ENCODE measurements at regions of chr16 and their contacts with region 1.

Region 1: DNA sequence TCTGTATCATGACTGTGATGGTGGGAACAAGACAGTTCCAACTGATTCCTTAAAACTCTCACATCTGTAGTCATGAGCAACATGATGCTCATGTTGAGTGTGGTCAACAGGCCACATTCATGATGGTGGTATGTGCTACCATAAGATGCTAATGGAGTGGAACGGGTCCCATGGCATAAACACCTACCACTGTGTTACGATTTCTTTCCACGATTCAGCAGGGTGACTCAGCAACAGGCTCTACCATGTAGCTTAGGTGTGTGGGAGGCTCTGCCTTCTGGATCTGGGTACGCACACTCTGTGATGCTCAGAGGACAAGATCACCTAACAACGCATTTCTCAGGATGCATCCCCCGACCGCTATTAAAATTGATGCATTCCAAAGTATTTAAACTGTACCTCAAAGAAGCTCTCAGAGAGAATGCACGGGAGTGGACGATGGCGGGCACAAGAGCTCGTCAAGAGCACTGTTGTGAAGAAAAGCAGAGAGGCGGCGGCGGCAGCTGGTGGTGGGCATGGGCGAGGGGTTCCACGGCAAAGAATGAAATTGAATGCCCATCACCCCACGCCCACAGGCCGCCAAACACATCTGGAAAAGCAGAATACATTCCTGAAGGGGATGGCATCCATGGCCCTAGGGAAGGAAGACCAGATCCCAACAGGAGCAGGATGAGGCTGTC is 133.3 kb downstream of the ZNF778 start:
- DNase-seq: peak; percentile 73
- H3K4me3 Mint-ChIP-seq: peak overlapping the region; percentile 2
- H3K27ac Mint-ChIP-seq: peak overlapping the region; percentile 79
- H3K4me1 Mint-ChIP-seq: peaks cover 87% of the 10 kb centered on the region
- H3K27me3 Mint-ChIP-seq: no peaks in the 10 kb centered on the region

Region 2: GRCh38 chr16:89319883-89320781 is 30.7 kb before region 1 on chr16:
- CTCF ChIA-PET with region 1: no interaction called
- POLR2A ChIA-PET with region 1: interaction called, 13 read pairs
- intact Hi-C with region 1: loop called (anchors 1 kb)
- DNase-seq: peak; percentile 74
- H3K4me3 Mint-ChIP-seq: peak overlapping the region; percentile 21
- H3K27ac Mint-ChIP-seq: peak overlapping the region; percentile 76
- H3K4me1 Mint-ChIP-seq: peaks cover 96% of the 10 kb centered on the region
- H3K27me3 Mint-ChIP-seq: no peaks in the 10 kb centered on the region

Region 3: GRCh38 chr16:89325861-89326471 is 24.9 kb before region 1 on chr16:
- CTCF ChIA-PET with region 1: no interaction called
- POLR2A ChIA-PET with region 1: interaction called, 13 read pairs
- intact Hi-C with region 1: loop called (anchors 1 kb)
- DNase-seq: peak; percentile 48
- H3K4me3 Mint-ChIP-seq: no peak overlapping the region
- H3K27ac Mint-ChIP-seq: peak overlapping the region; percentile 46
- H3K4me1 Mint-ChIP-seq: peaks cover 87% of the 10 kb centered on the region
- H3K27me3 Mint-ChIP-seq: no peaks in the 10 kb centered on the region

Region 4: DNA sequence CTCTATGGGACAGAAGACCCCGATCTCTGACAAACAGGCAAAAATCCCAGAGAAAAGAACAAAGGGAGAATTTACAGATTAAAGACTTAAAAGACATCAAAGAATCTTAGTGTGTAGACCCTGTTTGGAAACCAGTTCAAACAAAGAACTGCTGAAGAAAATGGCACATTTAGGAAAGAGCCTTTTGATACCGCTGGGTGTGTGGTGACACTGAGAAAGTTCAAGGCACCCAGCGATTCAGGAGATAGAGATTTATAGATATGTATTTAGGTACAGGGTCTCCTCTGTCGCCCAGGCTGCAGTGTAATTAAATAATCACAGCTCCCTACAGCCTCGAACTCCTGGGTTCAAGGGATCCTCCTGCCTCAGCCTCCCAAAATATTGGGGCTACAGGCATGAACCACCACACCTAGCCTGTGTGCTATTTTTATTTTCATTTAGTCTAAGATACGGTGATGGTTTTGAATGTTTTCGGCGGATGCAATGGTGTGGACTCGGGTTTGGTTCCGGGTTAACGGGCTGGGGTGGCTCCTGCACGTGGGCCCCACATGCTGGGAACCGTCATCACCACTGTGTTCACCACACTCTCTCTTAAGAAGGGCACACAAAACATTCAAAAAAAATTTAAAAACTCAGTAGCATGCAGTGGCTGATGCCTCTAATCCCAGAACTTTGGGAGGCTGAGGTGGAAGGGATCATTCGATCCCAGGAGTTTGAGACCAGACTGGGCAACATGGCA is 19.3 kb before region 1 on chr16:
- CTCF ChIA-PET with region 1: interaction called, 3 read pairs
- POLR2A ChIA-PET with region 1: interaction called, 4 read pairs
- intact Hi-C with region 1: loop called (anchors 2 kb)
- DNase-seq: no peak
- H3K4me3 Mint-ChIP-seq: no peak overlapping the region
- H3K27ac Mint-ChIP-seq: peak overlapping the region; percentile 39
- H3K4me1 Mint-ChIP-seq: peaks cover 84% of the 10 kb centered on the region
- H3K27me3 Mint-ChIP-seq: no peaks in the 10 kb centered on the region

Region 5: GRCh38 chr16:89371968-89372634 is 21.3 kb after region 1 on chr16:
- CTCF ChIA-PET with region 1: no interaction called
- POLR2A ChIA-PET with region 1: no interaction called
- intact Hi-C with region 1: no loop called
- DNase-seq: no peak
- H3K4me3 Mint-ChIP-seq: no peak overlapping the region
- H3K27ac Mint-ChIP-seq: no peak overlapping the region
- H3K4me1 Mint-ChIP-seq: peaks cover 72% of the 10 kb centered on the region
- H3K27me3 Mint-ChIP-seq: no peaks in the 10 kb centered on the region

Region 6: DNA sequence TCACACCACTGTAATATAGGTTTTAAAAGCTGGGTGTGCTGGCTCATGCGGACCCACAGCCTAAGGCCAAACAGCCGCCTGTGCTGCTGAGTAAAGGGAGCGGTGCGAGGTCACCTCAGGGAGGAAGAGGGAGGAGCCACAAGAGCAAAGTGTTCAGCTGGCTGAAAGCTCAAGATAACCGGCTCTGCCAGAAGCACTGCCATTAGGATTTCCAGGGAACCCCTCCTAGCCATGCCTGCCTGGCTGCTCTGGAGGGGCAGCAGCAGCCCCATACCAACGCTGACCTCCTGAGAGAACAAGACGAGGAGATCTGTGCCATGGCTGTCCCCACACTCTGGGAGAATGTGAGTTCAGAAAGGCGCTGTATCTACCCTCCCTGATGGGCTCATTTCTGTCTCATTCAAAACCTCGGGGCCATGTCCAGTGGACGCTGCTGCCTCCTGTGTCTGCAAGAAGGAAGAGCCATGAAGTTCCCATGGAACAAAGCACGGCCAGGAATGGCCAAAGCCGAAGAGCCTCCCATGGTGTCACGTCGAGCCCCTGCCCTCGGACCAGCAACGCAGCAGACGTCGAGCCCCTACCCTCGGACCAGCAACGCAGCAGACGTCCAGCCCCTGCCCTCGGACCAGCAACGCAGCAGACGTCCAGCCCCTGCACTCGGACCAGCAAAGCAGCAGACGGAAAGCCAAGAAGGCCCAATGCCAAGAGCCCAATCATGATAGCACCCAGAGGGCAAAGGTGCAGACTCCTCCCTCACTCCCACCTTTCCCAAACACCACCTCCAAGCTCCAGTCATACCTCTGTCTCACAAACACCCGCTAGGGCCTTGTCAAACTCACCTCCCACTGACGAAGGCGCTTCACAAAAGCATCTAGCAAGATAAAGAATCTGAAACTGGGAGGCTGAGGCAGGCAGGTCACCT is 32.5 kb after region 1 on chr16:
- CTCF ChIA-PET with region 1: no interaction called
- POLR2A ChIA-PET with region 1: no interaction called
- intact Hi-C with region 1: no loop called
- DNase-seq: peak; percentile 53
- H3K4me3 Mint-ChIP-seq: peak overlapping the region; percentile 4
- H3K27ac Mint-ChIP-seq: peak overlapping the region; percentile 82
- H3K4me1 Mint-ChIP-seq: peaks cover 84% of the 10 kb centered on the region
- H3K27me3 Mint-ChIP-seq: no peaks in the 10 kb centered on the region